ENCODE measurements at regions of chrX and their contacts with region 1.

Region 1: GRCh38 chrX:74536152-74536831 is 78.1 kb downstream of the RLIM start:
- DNase-seq: peak; percentile 89
- ATAC-seq: peak; percentile 92

Region 2: GRCh38 chrX:74421036-74421739 is 115.1 kb before region 1 on chrX and contains the start of gene SLC16A2:
- intact Hi-C with region 1: loop called (anchors 5 kb)
- DNase-seq: peak; percentile 79
- ATAC-seq: peak; percentile 82
- total RNA-seq, gene SLC16A2: 6.7 TPM

Region 3: DNA sequence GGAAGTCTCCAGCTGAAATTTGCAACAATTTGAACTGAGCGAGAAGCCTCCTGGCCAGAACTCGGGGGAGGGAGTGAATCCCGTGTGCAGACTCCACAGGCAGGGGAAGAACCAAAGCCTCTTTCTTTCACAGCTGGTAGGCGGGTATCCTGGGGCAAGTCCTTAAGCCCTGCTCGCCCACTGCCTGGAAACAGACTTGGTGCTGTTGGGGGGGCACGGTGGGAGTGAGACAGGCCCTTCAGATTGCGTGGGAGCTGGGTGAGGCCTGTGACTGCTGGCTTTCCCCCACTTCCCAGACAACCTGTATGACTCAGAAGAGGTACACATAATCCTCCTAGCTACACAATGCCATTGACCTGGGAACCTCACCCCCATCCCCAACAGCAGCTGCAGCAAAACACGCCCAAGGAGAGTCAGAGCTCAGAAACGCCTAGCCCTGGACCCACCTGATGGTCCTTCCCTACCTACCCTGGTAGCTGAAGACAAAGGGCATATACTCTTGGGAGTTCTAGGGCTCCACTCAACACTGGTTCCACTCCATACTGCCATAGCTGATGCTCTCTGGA is 100.5 kb after region 1 on chrX:
- intact Hi-C with region 1: no loop called
- DNase-seq: no peak
- ATAC-seq: no peak

Region 4: DNA sequence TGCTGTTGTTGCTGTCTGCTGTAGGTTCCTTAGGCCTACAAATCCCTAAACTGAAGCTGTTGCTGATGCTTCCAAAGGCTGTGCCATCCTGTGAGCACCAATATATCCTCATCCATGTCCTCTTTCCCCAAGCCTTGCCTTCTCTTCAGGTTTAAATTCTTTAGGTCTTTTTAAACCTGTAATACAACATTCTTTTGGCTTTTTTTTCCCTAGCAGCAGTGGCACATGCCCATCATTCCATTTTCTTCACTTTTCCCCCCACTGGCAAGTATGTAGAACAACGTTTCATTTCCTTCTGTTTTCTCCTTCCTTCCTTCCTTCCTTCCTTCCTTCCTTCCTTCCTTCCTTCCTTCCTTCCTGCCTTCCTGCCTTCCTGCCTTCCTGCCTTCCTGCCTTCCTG is 130.0 kb after region 1 on chrX:
- intact Hi-C with region 1: no loop called
- DNase-seq: no peak
- ATAC-seq: no peak

Measured in left ventricle myocardium superior (tissue), 1 donor.